Activated CD4-positive, alpha-beta memory T cell treated with anti-CD3 and anti-CD28 coated beads, Interleukin-2, amount 10 ng/mL, durations not matched to agents 7 days and 5 days (primary cell): ENCODE measurements at regions of chr5 and their contacts with region 1.

Region 1: DNA sequence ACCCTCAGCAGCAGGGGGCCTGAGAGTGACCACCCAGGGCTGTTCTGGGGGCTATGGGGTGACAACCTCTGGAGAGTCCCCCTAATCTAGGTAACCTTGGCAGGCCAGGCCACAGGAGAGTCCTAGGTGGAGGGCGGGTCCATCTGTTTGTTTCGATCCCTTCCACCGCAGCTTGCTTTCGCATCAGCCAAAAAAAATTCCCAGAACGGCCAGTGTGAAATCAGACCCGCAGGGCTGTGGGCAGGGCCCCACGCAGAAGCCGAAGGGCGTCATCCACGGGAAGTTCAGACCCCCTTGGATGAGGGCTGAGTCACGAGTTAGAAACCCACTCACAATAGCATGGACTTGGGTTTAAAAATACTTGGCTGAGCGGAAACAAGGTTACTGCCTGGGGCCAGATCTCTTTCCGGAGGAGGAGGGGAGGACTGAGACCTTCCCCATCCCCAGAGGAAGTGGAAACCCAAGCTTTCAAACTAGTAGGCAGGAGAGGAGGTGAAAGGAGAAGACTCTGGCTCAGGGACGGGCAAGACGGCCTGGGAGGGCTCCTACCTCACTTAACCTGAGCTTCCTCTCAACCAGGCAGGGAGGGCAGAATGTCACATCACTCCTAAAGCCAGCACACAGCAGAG is 8.5 kb downstream of the STK10 start:
- DNase-seq: peak; percentile 61
- H3K4me3 Mint-ChIP-seq: peak overlapping the region; percentile 70
- H3K27ac Mint-ChIP-seq: peak overlapping the region; percentile 96
- H3K4me1 Mint-ChIP-seq: peaks cover 96% of the 10 kb centered on the region
- H3K27me3 Mint-ChIP-seq: no peaks in the 10 kb centered on the region

Region 2: GRCh38 chr5:171387345-171387969 is 792.0 kb before region 1 on chr5 and contains the start of gene NPM1:
- CTCF ChIA-PET with region 1: no interaction called
- POLR2A ChIA-PET with region 1: interaction called, 15 read pairs
- DNase-seq: peak; percentile 97
- H3K4me3 Mint-ChIP-seq: peak within 1 kb of the TSS; percentile 99
- H3K27ac Mint-ChIP-seq: peak within 1 kb of the TSS; percentile 98
- H3K4me1 Mint-ChIP-seq: peaks cover 53% of the 10 kb centered on the region
- H3K27me3 Mint-ChIP-seq: peaks cover 2% of the 10 kb centered on the region
- total RNA-seq, gene NPM1: 1,119 to 1,157 TPM

Region 3: GRCh38 chr5:172065501-172065990 is 113.9 kb before region 1 on chr5:
- CTCF ChIA-PET with region 1: no interaction called
- POLR2A ChIA-PET with region 1: interaction called, 15 read pairs
- DNase-seq: no peak
- H3K4me3 Mint-ChIP-seq: no peak overlapping the region
- H3K27ac Mint-ChIP-seq: peak overlapping the region; percentile 82
- H3K4me1 Mint-ChIP-seq: peaks cover 54% of the 10 kb centered on the region
- H3K27me3 Mint-ChIP-seq: no peaks in the 10 kb centered on the region

Region 4: DNA sequence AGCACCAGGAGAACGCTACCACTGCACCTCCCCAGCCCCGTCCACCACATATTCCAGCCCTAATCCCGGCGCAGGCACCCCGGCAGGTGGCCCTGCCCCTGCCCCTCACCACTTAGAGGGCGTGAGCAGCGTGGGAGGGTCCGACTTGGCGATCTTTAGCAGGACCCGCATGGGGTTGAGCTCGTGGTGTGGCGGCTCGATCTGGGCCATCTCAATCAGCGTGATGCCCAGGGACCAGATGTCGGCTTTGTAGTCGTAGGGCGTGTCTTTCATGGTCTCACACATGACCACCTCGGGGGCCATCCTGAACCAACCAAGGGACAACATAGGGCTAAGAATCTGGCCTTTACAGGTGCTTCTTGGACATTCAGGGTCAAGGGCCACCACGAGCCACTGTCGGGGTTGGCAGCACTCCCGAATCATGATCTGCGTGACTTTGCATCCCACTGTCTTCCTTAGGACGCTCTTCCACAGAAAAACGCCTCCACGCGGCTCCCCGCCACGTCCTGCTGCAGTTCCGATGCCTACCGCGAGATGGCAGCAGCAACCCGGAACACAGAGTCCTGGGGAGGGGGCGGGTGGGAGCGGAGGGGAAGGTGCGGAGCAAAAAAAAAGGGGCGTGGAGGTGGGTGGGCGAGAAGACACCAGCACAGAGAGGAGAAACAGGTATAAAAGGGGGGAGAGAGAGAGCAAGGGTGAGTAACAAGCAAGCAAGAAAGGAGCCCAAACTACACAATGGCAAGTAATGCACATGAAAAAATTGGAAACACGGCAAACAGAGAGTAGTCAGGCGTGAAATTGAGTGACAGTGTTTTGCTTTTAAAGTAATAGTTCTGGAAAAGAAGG is 72.7 kb before region 1 on chr5:
- CTCF ChIA-PET with region 1: interaction called, 135 read pairs
- POLR2A ChIA-PET with region 1: interaction called, 905 read pairs
- DNase-seq: peak; percentile 66
- H3K4me3 Mint-ChIP-seq: peak overlapping the region; percentile 21
- H3K27ac Mint-ChIP-seq: peak overlapping the region; percentile 71
- H3K4me1 Mint-ChIP-seq: peaks cover 76% of the 10 kb centered on the region
- H3K27me3 Mint-ChIP-seq: no peaks in the 10 kb centered on the region

Region 5: DNA sequence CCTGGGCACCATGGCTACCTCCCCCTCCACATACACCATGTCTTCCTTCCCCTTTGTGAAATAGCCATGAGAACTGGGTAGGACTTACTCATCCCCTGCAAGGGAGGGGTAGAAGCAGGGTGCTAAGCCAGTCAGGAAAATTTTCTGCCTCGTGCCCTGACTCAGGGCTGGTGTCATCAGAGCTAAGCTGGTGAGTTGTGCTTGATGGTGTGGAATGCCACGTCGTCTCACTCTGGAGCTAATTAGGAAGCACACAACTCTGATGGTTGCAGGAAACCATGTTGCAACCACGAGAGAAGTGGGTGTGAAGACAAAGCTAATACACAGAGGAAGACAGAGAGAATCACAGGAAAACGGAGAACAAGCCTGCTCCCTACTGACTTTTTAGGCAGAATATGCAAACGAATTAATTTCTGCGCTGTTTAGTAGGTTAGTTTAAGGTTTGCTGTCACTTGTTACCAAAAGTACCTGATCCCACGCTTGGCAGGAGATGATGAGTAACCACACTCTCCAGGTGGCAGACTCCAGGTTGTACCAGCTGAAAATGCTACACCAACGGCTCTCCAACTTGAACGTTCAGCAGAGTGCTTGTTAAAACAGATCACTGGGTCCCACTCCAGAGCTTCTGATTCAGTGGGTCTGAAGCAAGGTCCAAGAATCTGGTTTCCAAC is 46.0 kb before region 1 on chr5:
- CTCF ChIA-PET with region 1: interaction called, 3 read pairs
- POLR2A ChIA-PET with region 1: interaction called, 13 read pairs
- DNase-seq: peak; percentile 39
- H3K4me3 Mint-ChIP-seq: no peak overlapping the region
- H3K27ac Mint-ChIP-seq: peak overlapping the region; percentile 78
- H3K4me1 Mint-ChIP-seq: peaks cover 54% of the 10 kb centered on the region
- H3K27me3 Mint-ChIP-seq: no peaks in the 10 kb centered on the region

Region 6: DNA sequence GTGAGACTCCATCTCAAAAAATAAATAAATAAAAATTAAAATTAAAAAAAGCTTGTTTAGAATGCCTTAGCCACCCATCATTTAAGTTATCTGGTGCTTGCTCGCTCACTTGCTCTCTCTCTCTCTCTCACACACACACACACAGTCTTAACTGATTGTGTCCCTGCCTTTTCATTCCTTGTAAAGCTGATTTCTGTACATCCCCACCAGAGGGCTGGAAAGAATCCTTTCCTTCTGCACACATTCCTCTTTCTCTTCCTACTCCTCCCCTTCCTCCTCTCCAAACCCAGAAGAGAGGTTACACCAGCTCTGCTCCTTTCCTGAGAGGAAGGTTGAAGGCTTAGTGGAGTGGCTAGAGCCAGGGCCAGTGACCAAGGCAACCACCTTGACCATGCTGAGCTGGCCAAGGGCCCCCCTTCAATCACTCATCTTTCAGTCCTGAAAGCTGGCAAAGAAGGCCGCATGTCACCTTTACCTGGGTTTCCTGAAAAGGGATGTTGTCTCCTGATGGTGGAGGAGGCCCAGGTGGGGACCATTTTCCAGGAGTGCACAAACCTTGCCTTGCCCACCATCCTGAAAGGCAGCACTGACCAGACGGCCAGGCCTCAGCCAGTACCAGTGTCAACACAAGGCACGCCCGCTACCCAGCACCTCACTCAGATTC is 17.0 kb before region 1 on chr5:
- CTCF ChIA-PET with region 1: interaction called, 4 read pairs
- POLR2A ChIA-PET with region 1: interaction called, 83 read pairs
- DNase-seq: no peak
- H3K4me3 Mint-ChIP-seq: no peak overlapping the region
- H3K27ac Mint-ChIP-seq: no peak overlapping the region
- H3K4me1 Mint-ChIP-seq: peaks cover 55% of the 10 kb centered on the region
- H3K27me3 Mint-ChIP-seq: no peaks in the 10 kb centered on the region

Region 7: GRCh38 chr5:172216345-172216744 is 36.9 kb after region 1 on chr5:
- CTCF ChIA-PET with region 1: no interaction called
- POLR2A ChIA-PET with region 1: no interaction called
- DNase-seq: no peak
- H3K4me3 Mint-ChIP-seq: no peak overlapping the region
- H3K27ac Mint-ChIP-seq: no peak overlapping the region
- H3K4me1 Mint-ChIP-seq: peaks cover 3% of the 10 kb centered on the region
- H3K27me3 Mint-ChIP-seq: no peaks in the 10 kb centered on the region

Region 8: GRCh38 chr5:172293054-172293744 is 113.7 kb after region 1 on chr5:
- CTCF ChIA-PET with region 1: interaction called, 11 read pairs
- POLR2A ChIA-PET with region 1: interaction called, 6 read pairs
- DNase-seq: peak; percentile 70
- H3K4me3 Mint-ChIP-seq: no peak overlapping the region
- H3K27ac Mint-ChIP-seq: no peak overlapping the region
- H3K4me1 Mint-ChIP-seq: peaks cover 2% of the 10 kb centered on the region
- H3K27me3 Mint-ChIP-seq: peaks cover 11% of the 10 kb centered on the region

Region 9: GRCh38 chr5:172347496-172348052 is 168.1 kb after region 1 on chr5:
- CTCF ChIA-PET with region 1: no interaction called
- POLR2A ChIA-PET with region 1: no interaction called
- DNase-seq: no peak
- H3K4me3 Mint-ChIP-seq: no peak overlapping the region
- H3K27ac Mint-ChIP-seq: no peak overlapping the region
- H3K4me1 Mint-ChIP-seq: no peaks in the 10 kb centered on the region
- H3K27me3 Mint-ChIP-seq: peaks cover 12% of the 10 kb centered on the region